Left ventricle myocardium inferior (tissue), 1 donor: ENCODE measurements at regions of chr9 and their contacts with region 1.

Region 1: GRCh38 chr9:130860458-130861316 is 25.6 kb downstream of the ABL1 start:
- DNase-seq: peak; percentile 83
- H3K4me3 ChIP-seq: peak overlapping the region; percentile 32
- H3K27ac ChIP-seq: peak overlapping the region; percentile 76
- H3K4me1 ChIP-seq: peaks cover 69% of the 10 kb centered on the region
- H3K27me3 ChIP-seq: no peaks in the 10 kb centered on the region
- CTCF ChIP-seq: peak; percentile 64

Region 2: DNA sequence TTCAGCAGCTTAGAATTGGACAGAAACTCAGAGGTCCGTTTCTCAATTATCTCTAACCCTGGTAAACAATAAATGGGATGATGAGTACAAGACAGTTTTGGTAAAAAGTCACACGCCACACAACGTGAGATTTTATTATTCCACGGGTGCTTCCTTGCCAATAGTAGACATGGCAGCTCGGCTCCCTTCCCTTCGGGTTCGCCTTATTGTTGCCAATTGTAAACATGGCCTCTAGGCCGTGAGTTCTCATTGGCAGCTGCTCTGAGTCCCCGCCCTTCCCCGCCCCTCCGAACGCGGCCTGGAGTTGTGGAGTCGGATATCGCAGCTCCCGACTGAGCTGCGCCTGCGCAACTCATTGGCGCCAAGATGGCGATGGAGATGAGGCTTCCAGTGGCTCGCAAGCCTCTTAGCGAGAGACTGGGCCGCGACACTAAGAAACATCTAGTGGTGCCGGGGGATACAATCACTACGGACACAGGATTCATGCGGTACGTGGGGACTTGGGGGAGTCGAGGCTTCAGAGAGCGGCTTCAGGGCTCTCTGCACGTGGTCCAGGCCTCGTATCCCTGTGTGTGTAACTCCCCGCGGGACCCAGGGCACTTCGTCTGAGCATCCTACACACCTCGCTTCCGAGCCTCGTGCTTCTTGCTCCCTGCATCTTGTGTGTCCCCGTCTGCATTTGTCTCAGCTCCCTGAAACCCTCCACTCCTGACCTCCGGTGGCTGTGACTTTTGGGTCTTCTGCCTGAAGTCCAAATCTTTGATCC is 167.1 kb before region 1 on chr9 and contains the start of gene EXOSC2:
- intact Hi-C with region 1: no loop called
- DNase-seq: peak; percentile 99
- H3K4me3 ChIP-seq: peak within 1 kb of the TSS; percentile 87
- H3K27ac ChIP-seq: peak within 1 kb of the TSS; percentile 80
- H3K4me1 ChIP-seq: peaks cover 33% of the 10 kb centered on the region
- H3K27me3 ChIP-seq: no peaks in the 10 kb centered on the region
- CTCF ChIP-seq: no peak
- total RNA-seq, gene EXOSC2: 12.0 TPM

Region 3: GRCh38 chr9:130707225-130707976 is 153.3 kb before region 1 on chr9:
- intact Hi-C with region 1: loop called (anchors 5 kb)
- DNase-seq: peak; percentile 38
- H3K4me3 ChIP-seq: no peak overlapping the region
- H3K27ac ChIP-seq: no peak overlapping the region
- H3K4me1 ChIP-seq: peaks cover 4% of the 10 kb centered on the region
- H3K27me3 ChIP-seq: no peaks in the 10 kb centered on the region
- CTCF ChIP-seq: peak; percentile 79